ENCODE measurements at regions of chr5 and their contacts with region 1.

Region 1: DNA sequence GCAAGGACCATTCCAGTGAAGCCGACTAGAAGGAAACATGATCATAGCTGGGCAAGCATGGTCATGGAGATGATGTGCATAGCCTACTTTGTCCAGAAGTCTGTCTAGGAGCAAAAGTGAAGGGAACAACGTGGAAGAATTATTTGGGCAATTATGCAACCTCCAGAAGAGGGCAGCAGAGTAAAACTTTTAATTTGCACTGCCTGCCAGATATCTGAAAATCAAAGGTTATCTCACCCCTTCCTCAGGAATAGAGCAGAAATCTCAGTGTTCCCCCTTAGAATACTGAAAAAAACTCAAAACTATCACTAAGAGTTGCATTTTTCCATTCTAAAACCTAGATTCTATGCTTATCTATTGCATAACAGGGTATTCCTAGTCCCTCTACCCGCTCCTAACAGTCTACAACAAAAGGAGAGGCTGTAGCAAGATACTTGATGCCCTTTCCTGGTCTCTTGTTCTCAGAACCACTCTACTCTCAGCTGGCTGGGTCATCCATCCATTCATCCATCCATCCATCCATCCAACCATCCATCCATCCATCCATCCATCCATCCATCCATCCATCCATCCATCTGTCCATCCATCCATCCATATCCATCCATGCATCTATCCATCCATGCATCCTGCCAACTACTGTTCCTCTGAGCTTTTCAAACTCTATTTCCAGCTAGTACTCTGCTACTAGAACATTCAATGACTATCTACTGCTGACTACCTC is 8.4 kb upstream of the SETD9 start:
- DNase-seq: peak; percentile 19 to 65 (median 32)
- ATAC-seq: peak; percentile 83
- H3K4me3 ChIP-seq: no peak overlapping the region
- H3K27ac ChIP-seq: no peak overlapping the region
- H3K4me1 ChIP-seq: no peaks in the 10 kb centered on the region
- H3K27me3 ChIP-seq: no peaks in the 10 kb centered on the region
- CTCF ChIP-seq: peak; percentile 67 to 87 (median 71)
- EP300 ChIP-seq: no peak
- POLR2A ChIP-seq: no peak
- RAD21 ChIP-seq: peak; percentile 91 to 97

Region 2: DNA sequence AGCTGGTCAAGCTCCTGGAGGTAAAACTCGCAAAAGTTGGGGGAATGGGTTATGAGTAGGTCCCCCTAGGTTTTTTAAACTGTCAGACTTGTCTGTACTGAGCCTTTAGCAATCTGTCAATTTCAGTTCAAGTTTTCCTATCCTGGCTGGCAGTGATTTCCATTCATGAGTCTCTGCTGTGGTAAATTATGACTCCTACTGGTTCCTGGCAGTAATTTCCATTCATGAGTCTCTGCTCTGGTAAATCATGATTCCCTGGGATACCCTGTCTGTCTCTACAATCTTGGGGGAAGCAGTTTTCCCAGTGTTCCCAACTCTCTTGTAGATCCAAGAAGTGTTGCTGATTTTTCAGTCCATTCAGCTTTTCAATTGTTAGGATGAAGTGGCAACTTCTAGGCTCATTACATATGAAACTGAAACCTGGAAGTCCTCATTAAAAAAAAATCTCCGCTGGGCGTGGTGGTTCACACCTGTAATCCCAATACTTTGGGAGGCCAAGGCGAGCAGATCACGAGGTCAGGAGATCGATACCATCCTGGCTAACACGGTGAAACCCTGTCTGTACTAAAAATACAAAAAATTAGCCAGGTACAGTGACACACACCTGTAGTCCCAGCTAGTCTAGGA is 181.5 kb after region 1 on chr5:
- CTCF ChIA-PET with region 1: no interaction called
- POLR2A ChIA-PET with region 1: no interaction called
- in situ Hi-C with region 1: no loop called
- intact Hi-C with region 1: loop called (anchors 5 kb)
- DNase-seq: no peak
- ATAC-seq: no peak
- H3K4me3 ChIP-seq: no peak overlapping the region
- H3K27ac ChIP-seq: no peak overlapping the region
- H3K4me1 ChIP-seq: no peaks in the 10 kb centered on the region
- H3K27me3 ChIP-seq: peaks cover 4 to 9% of the 10 kb centered on the region in 2 experiments; a peak in 3 of 5 replicates
- CTCF ChIP-seq: peak in 2 of 3 experiments; percentile 22 to 48; a peak in 4 of 6 replicates
- EP300 ChIP-seq: no peak
- POLR2A ChIP-seq: no peak
- RAD21 ChIP-seq: peak; percentile 22 to 70; a peak in 2 of 4 replicates

Region 3: GRCh38 chr5:57137401-57137800 is 236.4 kb after region 1 on chr5:
- CTCF ChIA-PET with region 1: interaction called, 6 read pairs
- POLR2A ChIA-PET with region 1: no interaction called
- in situ Hi-C with region 1: loop called (anchors 5 kb)
- intact Hi-C with region 1: loop called (anchors 2 kb)
- DNase-seq: peak in 1 of 4 experiments; percentile 8
- ATAC-seq: no peak
- H3K4me3 ChIP-seq: no peak overlapping the region
- H3K27ac ChIP-seq: no peak overlapping the region
- H3K4me1 ChIP-seq: peaks cover 0 to 2% of the 10 kb centered on the region in 2 experiments; a peak in 2 of 5 replicates
- H3K27me3 ChIP-seq: peaks cover 5 to 17% of the 10 kb centered on the region in 2 experiments; a peak in 3 of 5 replicates
- CTCF ChIP-seq: no peak
- EP300 ChIP-seq: no peak
- POLR2A ChIP-seq: no peak
- RAD21 ChIP-seq: no peak

Region 4: DNA sequence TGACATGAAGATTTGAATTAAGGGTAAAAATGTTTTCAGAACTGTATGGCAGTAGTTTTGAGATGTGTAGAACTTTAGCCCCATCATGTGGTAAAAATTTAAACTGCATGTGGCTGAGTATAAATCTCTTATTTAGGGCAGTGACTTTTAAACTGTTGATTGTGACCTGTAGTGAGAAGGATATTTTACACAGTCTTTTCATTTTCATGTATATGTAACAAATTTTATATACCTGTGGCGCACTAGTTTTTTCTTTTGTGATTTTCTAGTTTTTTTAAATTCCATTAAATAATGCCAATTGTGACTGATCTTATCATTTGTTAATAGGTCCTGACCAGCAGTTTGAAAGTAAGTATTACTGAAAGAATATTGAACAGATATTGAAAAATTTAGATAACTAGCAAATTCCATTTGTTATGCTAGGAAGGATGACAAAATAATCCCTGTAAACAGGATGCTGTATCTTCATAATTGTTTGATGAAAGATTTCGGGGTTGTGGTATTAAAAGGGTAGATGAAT is 320.1 kb after region 1 on chr5:
- CTCF ChIA-PET with region 1: interaction called, 21 read pairs
- POLR2A ChIA-PET with region 1: no interaction called
- in situ Hi-C with region 1: loop called (anchors 5 kb)
- intact Hi-C with region 1: loop called (anchors 2 kb)
- DNase-seq: peak; percentile 34 to 69 (median 43)
- ATAC-seq: peak; percentile 88
- H3K4me3 ChIP-seq: no peak overlapping the region
- H3K27ac ChIP-seq: no peak overlapping the region
- H3K4me1 ChIP-seq: no peaks in the 10 kb centered on the region
- H3K27me3 ChIP-seq: no peaks in the 10 kb centered on the region
- CTCF ChIP-seq: peak; percentile 47 to 83 (median 49); a peak in 4 of 6 replicates
- EP300 ChIP-seq: no peak
- POLR2A ChIP-seq: no peak
- RAD21 ChIP-seq: peak; percentile 88

Region 5: DNA sequence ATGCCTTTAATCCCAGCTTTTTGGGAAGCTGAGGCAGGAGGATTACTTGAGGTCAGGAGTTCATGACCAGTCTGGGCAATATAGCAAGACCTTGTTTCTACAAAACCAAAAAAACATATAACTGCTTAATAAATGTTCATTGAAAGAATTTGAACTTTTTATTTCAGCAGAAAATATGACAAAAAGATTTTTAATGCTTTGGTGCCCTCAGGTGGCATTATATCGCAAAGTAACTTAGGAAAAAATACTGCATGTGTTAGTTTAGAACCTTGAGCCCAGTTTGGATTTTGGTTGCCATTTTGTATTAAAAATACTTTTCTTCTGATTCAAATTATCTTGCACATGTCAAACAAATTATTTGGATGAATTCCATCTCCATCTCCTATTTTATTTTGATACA is 376.1 kb after region 1 on chr5:
- CTCF ChIA-PET with region 1: interaction called, 7 read pairs
- POLR2A ChIA-PET with region 1: no interaction called
- in situ Hi-C with region 1: no loop called
- intact Hi-C with region 1: loop called (anchors 1 kb)
- DNase-seq: peak in 2 of 4 experiments; percentile 12 to 13
- ATAC-seq: no peak
- H3K4me3 ChIP-seq: no peak overlapping the region
- H3K27ac ChIP-seq: no peak overlapping the region
- H3K4me1 ChIP-seq: no peaks in the 10 kb centered on the region
- H3K27me3 ChIP-seq: no peaks in the 10 kb centered on the region
- CTCF ChIP-seq: peak in 2 of 3 experiments; percentile 13 to 57; a peak in 2 of 6 replicates
- EP300 ChIP-seq: no peak
- POLR2A ChIP-seq: no peak
- RAD21 ChIP-seq: peak; percentile 58 to 70

Measured in K562 (cell line).